Caco-2 (cell line): ENCODE measurements at regions of chr14 and their contacts with region 1.

Region 1: DNA sequence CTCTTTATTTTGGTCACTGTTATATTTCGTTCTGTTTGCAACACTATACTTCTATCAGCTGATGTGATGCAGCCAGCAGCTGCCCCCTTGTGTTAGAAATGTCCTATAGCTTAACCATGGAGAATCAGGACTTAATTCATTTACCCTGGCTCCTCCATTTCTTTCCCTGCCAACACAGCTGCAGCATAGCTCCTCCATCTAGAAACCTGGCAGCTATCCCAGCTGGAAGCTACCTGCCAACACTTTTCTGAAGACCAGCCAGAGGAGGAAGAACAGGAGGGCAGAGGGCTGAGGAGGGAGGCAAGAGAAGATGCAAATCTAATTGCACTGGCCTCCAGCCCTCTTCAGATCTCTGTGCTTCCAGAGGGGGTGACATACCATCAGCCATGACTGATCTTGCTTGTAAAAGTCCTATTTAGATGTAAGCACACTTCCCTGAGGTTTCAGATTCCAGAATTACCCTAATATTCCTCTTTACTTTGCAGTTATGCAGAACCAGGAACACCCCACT is 156.8 kb upstream of the TMEM260 start:
- DNase-seq: peak in 1 of 2 experiments; percentile 35
- H3K4me3 ChIP-seq: no peak overlapping the region
- H3K4me3 Mint-ChIP-seq: no peak overlapping the region
- H3K27ac Mint-ChIP-seq: no peak overlapping the region
- H3K4me1 ChIP-seq: no peaks in the 10 kb centered on the region
- H3K4me1 Mint-ChIP-seq: no peaks in the 10 kb centered on the region
- H3K27me3 ChIP-seq: no peaks in the 10 kb centered on the region
- H3K27me3 Mint-ChIP-seq: no peaks in the 10 kb centered on the region
- CTCF ChIP-seq: peak; percentile 56 to 74

Region 2: DNA sequence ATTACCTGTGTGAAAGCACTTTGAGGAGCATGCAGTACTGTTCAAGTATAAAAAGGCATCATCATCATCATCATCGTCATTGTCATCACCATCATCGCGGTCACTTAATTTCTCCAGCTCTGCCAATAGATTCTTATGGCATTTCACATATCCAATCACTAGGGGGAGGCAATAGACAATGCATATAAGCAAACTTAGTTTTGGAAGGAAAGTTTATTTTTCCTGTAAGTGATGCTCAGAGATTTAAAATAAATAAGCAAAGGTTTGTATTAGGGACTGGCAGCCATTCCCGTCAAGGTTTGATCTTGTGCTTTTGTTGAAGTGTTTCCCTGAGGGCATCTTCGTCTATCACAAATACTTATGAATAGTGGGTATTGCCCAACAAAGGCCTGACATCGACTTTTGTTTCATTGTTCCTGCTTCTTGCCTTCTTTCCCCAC is 715.4 kb before region 1 on chr14:
- CTCF ChIA-PET with region 1: interaction called, 5 read pairs
- POLR2A ChIA-PET with region 1: no interaction called
- intact Hi-C with region 1: loop called (anchors 1 kb)
- DNase-seq: peak in 1 of 2 experiments; percentile 32
- H3K4me3 ChIP-seq: no peak overlapping the region
- H3K4me3 Mint-ChIP-seq: no peak overlapping the region
- H3K27ac Mint-ChIP-seq: no peak overlapping the region
- H3K4me1 ChIP-seq: peaks cover 4% of the 10 kb centered on the region; the same call in 1 of the 2 replicates
- H3K4me1 Mint-ChIP-seq: no peaks in the 10 kb centered on the region
- H3K27me3 ChIP-seq: no peaks in the 10 kb centered on the region
- H3K27me3 Mint-ChIP-seq: no peaks in the 10 kb centered on the region
- CTCF ChIP-seq: peak; percentile 53 to 65

Region 3: DNA sequence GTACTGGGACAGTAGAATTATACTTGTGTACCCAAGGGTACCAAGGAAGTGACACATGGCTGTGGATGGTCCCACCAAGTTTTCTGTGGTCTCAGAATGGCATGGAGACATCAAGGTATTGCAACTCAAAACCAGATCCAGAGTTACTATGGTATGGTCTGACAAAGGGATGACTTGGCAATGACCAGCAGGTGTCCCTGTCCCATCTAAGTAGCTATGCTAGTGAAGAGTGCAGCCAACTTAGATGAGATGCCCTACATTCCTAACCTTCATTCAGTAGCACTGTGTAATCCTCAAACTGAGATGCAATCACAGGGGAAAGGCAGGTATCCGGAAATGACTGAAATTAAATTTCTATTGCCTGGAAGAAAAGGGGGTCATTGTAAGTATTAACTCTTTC is 31.9 kb before region 1 on chr14:
- CTCF ChIA-PET with region 1: interaction called, 3 read pairs
- POLR2A ChIA-PET with region 1: no interaction called
- intact Hi-C with region 1: loop called (anchors 1 kb)
- DNase-seq: peak in 1 of 2 experiments; percentile 6
- H3K4me3 ChIP-seq: no peak overlapping the region
- H3K4me3 Mint-ChIP-seq: no peak overlapping the region
- H3K27ac Mint-ChIP-seq: no peak overlapping the region
- H3K4me1 ChIP-seq: no peaks in the 10 kb centered on the region
- H3K4me1 Mint-ChIP-seq: no peaks in the 10 kb centered on the region
- H3K27me3 ChIP-seq: no peaks in the 10 kb centered on the region
- H3K27me3 Mint-ChIP-seq: peaks cover 7% of the 10 kb centered on the region
- CTCF ChIP-seq: peak in 1 of 2 experiments; percentile 39

Region 4: GRCh38 chr14:56569174-56569573 is 146.4 kb after region 1 on chr14:
- CTCF ChIA-PET with region 1: no interaction called
- POLR2A ChIA-PET with region 1: no interaction called
- intact Hi-C with region 1: no loop called
- DNase-seq: no peak
- H3K4me3 ChIP-seq: no peak overlapping the region
- H3K4me3 Mint-ChIP-seq: no peak overlapping the region
- H3K27ac Mint-ChIP-seq: no peak overlapping the region
- H3K4me1 ChIP-seq: no peaks in the 10 kb centered on the region
- H3K4me1 Mint-ChIP-seq: no peaks in the 10 kb centered on the region
- H3K27me3 ChIP-seq: no peaks in the 10 kb centered on the region
- H3K27me3 Mint-ChIP-seq: peaks cover 8% of the 10 kb centered on the region
- CTCF ChIP-seq: no peak